PC-3 (cell line): ENCODE measurements at regions of chr17 and their contacts with region 1.

Region 1: GRCh38 chr17:4310349-4311060 is 46.7 kb upstream of the ANKFY1 start:
- DNase-seq: no peak
- ATAC-seq: no peak
- H3K4me3 ChIP-seq: no peak overlapping the region
- H3K27ac ChIP-seq: no peak overlapping the region
- H3K4me1 ChIP-seq: no peaks in the 10 kb centered on the region
- H3K27me3 ChIP-seq: no peaks in the 10 kb centered on the region
- CTCF ChIP-seq: no peak

Region 2: GRCh38 chr17:4366327-4367063 is 56.0 kb after region 1 on chr17 and contains the start of gene UBE2G1:
- CTCF ChIA-PET with region 1: no interaction called
- POLR2A ChIA-PET with region 1: no interaction called
- intact Hi-C with region 1: loop called (anchors 10 kb)
- DNase-seq: peak; percentile 94
- ATAC-seq: peak; percentile 77
- H3K4me3 ChIP-seq: peak within 1 kb of the TSS; percentile 84
- H3K27ac ChIP-seq: peak within 1 kb of the TSS; percentile 71
- H3K4me1 ChIP-seq: no peaks in the 10 kb centered on the region; the same call in 1 of the 2 replicates
- H3K27me3 ChIP-seq: no peaks in the 10 kb centered on the region
- CTCF ChIP-seq: peak; percentile 22; the same call in 1 of the 2 replicates
- total RNA-seq, gene UBE2G1: 35.8 and 46.8 TPM in 2 replicates